IMR-90 (cell line): ENCODE measurements at regions of chr1 and their contacts with region 1.

Region 1: DNA sequence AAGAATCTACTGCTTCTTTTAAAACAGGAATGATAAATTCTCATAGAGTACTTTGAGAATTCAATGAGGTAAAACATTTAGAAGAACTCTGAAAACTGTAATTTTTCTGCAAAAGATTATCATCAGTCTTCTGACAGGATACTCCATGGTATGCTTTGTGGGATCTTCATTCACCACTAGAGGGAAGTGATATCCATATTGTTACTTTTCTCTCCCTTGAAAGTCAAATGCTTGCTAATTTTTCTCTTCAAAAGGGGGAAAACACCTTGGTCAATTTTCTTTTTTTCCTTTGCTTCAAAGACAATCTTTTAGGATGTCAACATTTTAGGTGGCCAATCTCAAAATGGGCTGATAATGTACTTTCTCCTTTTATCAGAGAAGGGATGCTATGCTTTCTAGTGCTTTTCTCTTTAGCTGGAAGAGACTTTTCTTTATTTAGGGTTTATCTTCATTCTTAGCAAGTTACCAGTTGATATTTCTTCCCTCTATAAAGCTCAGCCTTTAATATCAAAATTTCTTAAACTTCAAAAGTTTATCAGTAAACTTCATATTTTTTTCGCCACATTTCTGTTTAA is 95.5 kb downstream of the NEGR1 start:
- DNase-seq: peak; percentile 38
- ATAC-seq: peak; percentile 60
- H3K4me3 ChIP-seq: no peak overlapping the region
- H3K27ac ChIP-seq: no peak overlapping the region
- H3K4me1 ChIP-seq: peaks cover 6% of the 10 kb centered on the region
- H3K27me3 ChIP-seq: no peaks in the 10 kb centered on the region
- CTCF ChIP-seq: peak; percentile 63
- POLR2A ChIP-seq: no peak
- RAD21 ChIP-seq: peak; percentile 74

Region 2: GRCh38 chr1:71587961-71588360 is 598.9 kb before region 1 on chr1:
- CTCF ChIA-PET with region 1: no interaction called
- POLR2A ChIA-PET with region 1: no interaction called
- dilution Hi-C with region 1: no loop called
- in situ Hi-C with region 1: no loop called
- intact Hi-C with region 1: loop called (anchors 5 kb)
- DNase-seq: peak; percentile 47
- ATAC-seq: 0 out of 2 replicates have a peak, but pooled peaks have one; percentile 46
- H3K4me3 ChIP-seq: no peak overlapping the region
- H3K27ac ChIP-seq: no peak overlapping the region
- H3K4me1 ChIP-seq: no peaks in the 10 kb centered on the region
- H3K27me3 ChIP-seq: no peaks in the 10 kb centered on the region
- CTCF ChIP-seq: peak; percentile 58
- POLR2A ChIP-seq: no peak
- RAD21 ChIP-seq: peak; percentile 61

Region 3: GRCh38 chr1:72623299-72623708 is 436.5 kb after region 1 on chr1:
- CTCF ChIA-PET with region 1: no interaction called
- POLR2A ChIA-PET with region 1: no interaction called
- dilution Hi-C with region 1: no loop called
- in situ Hi-C with region 1: no loop called
- intact Hi-C with region 1: loop called (anchors 5 kb)
- DNase-seq: peak; percentile 31
- ATAC-seq: peak; percentile 81
- H3K4me3 ChIP-seq: no peak overlapping the region
- H3K27ac ChIP-seq: no peak overlapping the region
- H3K4me1 ChIP-seq: no peaks in the 10 kb centered on the region
- H3K27me3 ChIP-seq: no peaks in the 10 kb centered on the region
- CTCF ChIP-seq: peak; percentile 50
- POLR2A ChIP-seq: no peak
- RAD21 ChIP-seq: peak; percentile 45